Activated CD4-positive, alpha-beta T cell treated with anti-CD3 and anti-CD28 coated beads for 36 hours (primary cell): ENCODE measurements at regions of chr10 and their contacts with region 1.

Region 1: DNA sequence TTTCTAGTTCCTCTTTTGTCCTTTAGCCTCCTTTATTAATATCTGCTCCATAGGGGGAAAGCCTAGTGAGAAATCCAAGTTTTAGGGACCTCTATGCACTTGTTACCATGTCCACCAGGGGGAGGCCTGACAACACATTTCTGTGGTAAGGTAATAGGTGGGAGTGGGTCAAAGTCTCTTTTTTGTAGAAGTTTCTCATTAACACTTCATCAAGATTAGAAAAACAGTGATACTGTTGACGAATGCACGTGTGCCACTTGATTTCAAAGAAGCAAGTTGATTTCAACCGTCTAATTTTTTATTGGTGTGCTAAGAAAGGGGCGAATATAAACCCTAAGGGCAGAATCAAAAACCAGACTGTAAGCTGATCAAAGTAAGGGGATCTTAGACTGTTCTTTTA is 30.6 kb downstream of the CISD1 start:
- DNase-seq: peak; percentile 74
- ATAC-seq: peak; percentile 87
- H3K4me3 Mint-ChIP-seq: no peak overlapping the region
- H3K27ac Mint-ChIP-seq: no peak overlapping the region
- H3K4me1 Mint-ChIP-seq: peaks cover 2% of the 10 kb centered on the region
- H3K27me3 Mint-ChIP-seq: peaks cover 6% of the 10 kb centered on the region

Region 2: GRCh38 chr10:58334817-58335305 is 35.3 kb after region 1 on chr10 and contains the start of gene UBE2D1:
- CTCF ChIA-PET with region 1: interaction called, 3 read pairs
- POLR2A ChIA-PET with region 1: no interaction called
- intact Hi-C with region 1: loop called in 1 of 2 experiments (anchors 2 kb)
- DNase-seq: peak; percentile 92
- ATAC-seq: peak; percentile 97
- H3K4me3 Mint-ChIP-seq: peak within 1 kb of the TSS; percentile 87
- H3K27ac Mint-ChIP-seq: peak within 1 kb of the TSS; percentile 87
- H3K4me1 Mint-ChIP-seq: peaks cover 36% of the 10 kb centered on the region
- H3K27me3 Mint-ChIP-seq: peaks cover 7% of the 10 kb centered on the region
- total RNA-seq, gene UBE2D1: 12.7 to 15.3 TPM

Region 3: GRCh38 chr10:58513188-58514110 is 213.9 kb after region 1 on chr10:
- CTCF ChIA-PET with region 1: interaction called, 4 read pairs
- POLR2A ChIA-PET with region 1: no interaction called
- intact Hi-C with region 1: loop called (anchors 5 to 10 kb)
- DNase-seq: peak; percentile 8
- ATAC-seq: peak; percentile 20
- H3K4me3 Mint-ChIP-seq: peak overlapping the region; percentile 58
- H3K27ac Mint-ChIP-seq: no peak overlapping the region
- H3K4me1 Mint-ChIP-seq: peaks cover 10% of the 10 kb centered on the region
- H3K27me3 Mint-ChIP-seq: peaks cover 41% of the 10 kb centered on the region